Calu3 (cell line): ENCODE measurements at regions of chr13 and their contacts with region 1.

Region 1: GRCh38 chr13:47598340-47598911 is 402.6 kb downstream of the SUCLA2 start:
- DNase-seq: no peak
- H3K4me3 Mint-ChIP-seq: no peak overlapping the region
- H3K27ac Mint-ChIP-seq: no peak overlapping the region
- H3K4me1 Mint-ChIP-seq: no peaks in the 10 kb centered on the region
- H3K27me3 Mint-ChIP-seq: no peaks in the 10 kb centered on the region
- CTCF ChIP-seq: no peak

Region 2: DNA sequence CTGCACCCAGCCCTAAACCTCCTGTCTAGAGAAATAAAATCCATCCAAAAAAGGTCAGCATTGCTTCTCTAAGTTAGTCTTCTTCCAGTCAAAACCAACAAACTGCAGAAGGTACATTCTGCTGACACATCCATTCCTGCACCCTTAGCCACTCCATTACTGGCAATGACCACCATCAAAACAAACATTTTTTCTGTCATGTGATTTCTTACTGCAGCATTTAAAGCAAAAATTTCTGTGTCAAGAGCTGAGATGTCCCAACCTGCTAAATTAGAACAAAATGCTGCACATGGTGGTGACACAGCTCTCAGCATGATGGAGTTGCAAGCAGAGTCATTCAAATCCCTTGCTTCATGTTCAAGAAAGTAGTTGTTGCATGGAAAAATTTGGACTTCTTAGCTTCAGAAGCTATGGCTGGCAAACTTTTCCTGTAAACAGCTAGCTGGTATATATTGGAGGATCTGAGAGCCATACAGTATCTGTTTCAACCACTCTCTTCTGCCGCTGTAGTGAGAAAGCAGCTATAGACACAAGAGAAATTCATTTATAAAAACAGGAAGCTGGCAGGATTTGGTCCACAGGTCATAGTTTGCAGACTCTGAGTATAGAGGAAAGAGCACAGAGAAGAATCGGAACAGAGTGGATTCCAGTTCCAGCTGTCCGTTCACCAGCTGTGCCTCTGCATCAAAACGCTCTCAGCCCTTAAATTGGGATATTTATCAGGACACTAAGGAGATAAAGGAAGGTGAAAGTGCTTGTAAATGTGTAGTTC is 1228.7 kb before region 1 on chr13:
- CTCF ChIA-PET with region 1: no interaction called
- intact Hi-C with region 1: no loop called
- DNase-seq: no peak
- H3K4me3 Mint-ChIP-seq: no peak overlapping the region
- H3K27ac Mint-ChIP-seq: no peak overlapping the region
- H3K4me1 Mint-ChIP-seq: peaks cover 3% of the 10 kb centered on the region
- H3K27me3 Mint-ChIP-seq: peaks cover 53% of the 10 kb centered on the region
- CTCF ChIP-seq: no peak

Region 3: DNA sequence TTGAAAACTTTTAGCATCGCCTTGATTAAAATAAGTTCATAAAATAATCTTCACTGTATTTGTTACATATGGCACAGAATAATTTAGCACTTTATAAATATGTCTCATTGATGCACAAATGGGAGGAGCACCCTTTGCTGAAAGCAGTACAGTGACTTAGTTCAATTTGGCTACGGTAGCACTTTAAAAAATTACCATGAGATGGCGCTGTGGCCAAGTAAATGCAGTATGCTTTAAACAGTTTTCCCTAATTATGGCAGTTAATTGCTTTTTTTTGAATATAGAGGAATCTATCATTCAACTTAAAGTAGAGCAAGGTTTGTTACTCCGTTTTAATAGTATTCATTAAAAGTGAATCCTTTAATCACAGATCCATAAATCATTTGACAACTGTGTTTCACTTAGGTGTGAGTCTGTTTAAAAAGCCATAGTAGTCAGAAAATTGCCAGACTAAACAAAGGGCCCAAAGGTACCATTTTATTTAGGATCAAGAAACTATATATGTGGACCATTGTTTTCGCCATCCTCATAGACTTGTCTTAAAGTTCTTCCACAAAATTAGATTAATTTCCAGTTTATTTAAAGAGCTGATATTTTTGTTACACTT is 766.7 kb before region 1 on chr13:
- CTCF ChIA-PET with region 1: no interaction called
- intact Hi-C with region 1: loop called (anchors 5 kb)
- DNase-seq: peak; percentile 38
- H3K4me3 Mint-ChIP-seq: no peak overlapping the region
- H3K27ac Mint-ChIP-seq: no peak overlapping the region
- H3K4me1 Mint-ChIP-seq: no peaks in the 10 kb centered on the region
- H3K27me3 Mint-ChIP-seq: no peaks in the 10 kb centered on the region
- CTCF ChIP-seq: peak; percentile 51

Region 4: GRCh38 chr13:47480121-47480520 is 118.3 kb before region 1 on chr13:
- CTCF ChIA-PET with region 1: no interaction called
- intact Hi-C with region 1: no loop called
- DNase-seq: no peak
- H3K4me3 Mint-ChIP-seq: no peak overlapping the region
- H3K27ac Mint-ChIP-seq: no peak overlapping the region
- H3K4me1 Mint-ChIP-seq: no peaks in the 10 kb centered on the region
- H3K27me3 Mint-ChIP-seq: no peaks in the 10 kb centered on the region
- CTCF ChIP-seq: no peak